Endothelial cell of umbilical vein (primary cell): ENCODE measurements at regions of chr16 and their contacts with region 1.

Region 1: DNA sequence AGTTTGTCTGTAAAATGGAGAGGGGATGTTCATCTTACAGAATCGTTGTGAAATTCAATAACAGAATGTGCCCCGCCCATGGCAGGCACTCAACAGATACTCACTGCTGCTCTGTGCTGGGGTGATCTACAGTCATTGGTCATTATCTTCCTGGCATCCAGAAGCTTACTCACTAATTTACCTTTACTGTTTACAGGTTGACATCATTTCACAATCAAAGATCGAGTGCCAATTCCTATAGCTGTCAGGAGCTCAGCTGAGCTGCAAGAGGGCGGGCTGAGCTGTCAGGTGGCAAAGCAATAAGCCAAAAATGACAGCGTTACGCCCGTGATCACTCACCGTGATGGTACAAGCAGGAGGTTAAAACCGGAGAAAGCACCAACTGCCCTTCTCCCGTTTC is 51.2 kb downstream of the LITAF start:
- DNase-seq: no peak
- H3K4me3 ChIP-seq: no peak overlapping the region
- H3K27ac ChIP-seq: no peak overlapping the region
- H3K4me1 ChIP-seq: peaks cover 3% of the 10 kb centered on the region
- H3K27me3 ChIP-seq: no peaks in the 10 kb centered on the region
- CTCF ChIP-seq: no peak
- POLR2A ChIP-seq: no peak

Region 2: DNA sequence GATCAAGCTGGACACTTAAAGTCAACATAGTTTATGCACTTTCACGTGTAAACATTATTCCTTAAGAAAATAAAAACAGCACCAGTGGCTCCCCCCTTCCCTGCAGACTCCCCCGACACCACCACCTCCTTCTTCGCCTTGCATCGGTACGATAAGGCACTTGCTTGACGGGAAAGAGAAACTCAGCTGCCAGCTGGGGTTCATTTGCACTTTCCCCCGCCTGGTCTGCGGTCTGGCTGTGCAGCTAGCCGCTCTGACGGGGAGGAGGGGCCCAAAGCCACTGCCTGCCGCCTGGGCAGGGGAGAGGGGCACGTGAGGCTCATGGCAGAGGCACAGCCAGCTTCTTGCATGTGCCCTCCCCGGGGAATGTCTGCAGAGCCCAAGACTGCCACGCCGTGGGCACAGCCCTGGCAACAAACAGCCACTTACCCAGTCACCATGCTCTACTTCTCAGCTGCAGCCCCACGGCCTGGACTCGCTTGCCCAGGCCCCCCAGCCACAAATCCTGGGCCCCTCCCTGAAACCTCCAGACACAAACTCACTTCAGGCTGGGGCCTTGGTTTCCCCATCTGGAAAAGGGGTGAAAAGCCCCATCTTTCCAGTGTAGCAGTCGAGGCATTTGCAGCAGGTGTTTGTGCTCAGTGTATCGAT is 237.9 kb before region 1 on chr16:
- CTCF ChIA-PET with region 1: no interaction called
- POLR2A ChIA-PET with region 1: no interaction called
- dilution Hi-C with region 1: no loop called
- intact Hi-C with region 1: no loop called
- DNase-seq: peak; percentile 15
- H3K4me3 ChIP-seq: no peak overlapping the region
- H3K27ac ChIP-seq: no peak overlapping the region
- H3K4me1 ChIP-seq: no peaks in the 10 kb centered on the region
- H3K27me3 ChIP-seq: no peaks in the 10 kb centered on the region
- CTCF ChIP-seq: no peak
- POLR2A ChIP-seq: no peak

Region 3: DNA sequence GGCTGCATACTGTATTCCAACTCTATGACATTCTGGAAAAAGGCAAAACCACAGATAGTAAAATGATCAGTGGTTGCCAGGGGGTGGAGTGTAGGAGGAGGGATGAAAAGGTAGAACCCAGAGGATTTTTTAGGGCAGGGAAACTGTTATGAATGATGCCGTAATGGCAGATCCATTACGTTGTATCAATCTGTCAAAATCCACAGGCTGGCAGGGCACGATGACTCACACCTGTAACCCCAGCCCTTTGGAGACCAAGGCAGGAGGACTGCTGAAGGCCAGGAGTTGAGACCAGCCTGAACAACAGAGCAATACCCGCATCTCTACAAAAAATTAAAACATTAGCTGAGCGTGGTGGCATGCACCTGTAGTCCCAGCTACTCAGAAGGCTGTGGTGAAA is 98.4 kb before region 1 on chr16:
- CTCF ChIA-PET with region 1: interaction called, 13 read pairs
- POLR2A ChIA-PET with region 1: no interaction called
- dilution Hi-C with region 1: no loop called
- intact Hi-C with region 1: no loop called
- DNase-seq: no peak
- H3K4me3 ChIP-seq: no peak overlapping the region
- H3K27ac ChIP-seq: no peak overlapping the region
- H3K4me1 ChIP-seq: no peaks in the 10 kb centered on the region
- H3K27me3 ChIP-seq: peaks cover 0 to 3% of the 10 kb centered on the region in 2 experiments
- CTCF ChIP-seq: no peak
- POLR2A ChIP-seq: no peak

Region 4: GRCh38 chr16:11506741-11507305 is 28.6 kb before region 1 on chr16:
- CTCF ChIA-PET with region 1: interaction called, 10 read pairs
- POLR2A ChIA-PET with region 1: no interaction called
- dilution Hi-C with region 1: no loop called
- intact Hi-C with region 1: no loop called
- DNase-seq: no peak
- H3K4me3 ChIP-seq: no peak overlapping the region
- H3K27ac ChIP-seq: no peak overlapping the region
- H3K4me1 ChIP-seq: no peaks in the 10 kb centered on the region
- H3K27me3 ChIP-seq: no peaks in the 10 kb centered on the region
- CTCF ChIP-seq: no peak
- POLR2A ChIP-seq: no peak

Region 5: DNA sequence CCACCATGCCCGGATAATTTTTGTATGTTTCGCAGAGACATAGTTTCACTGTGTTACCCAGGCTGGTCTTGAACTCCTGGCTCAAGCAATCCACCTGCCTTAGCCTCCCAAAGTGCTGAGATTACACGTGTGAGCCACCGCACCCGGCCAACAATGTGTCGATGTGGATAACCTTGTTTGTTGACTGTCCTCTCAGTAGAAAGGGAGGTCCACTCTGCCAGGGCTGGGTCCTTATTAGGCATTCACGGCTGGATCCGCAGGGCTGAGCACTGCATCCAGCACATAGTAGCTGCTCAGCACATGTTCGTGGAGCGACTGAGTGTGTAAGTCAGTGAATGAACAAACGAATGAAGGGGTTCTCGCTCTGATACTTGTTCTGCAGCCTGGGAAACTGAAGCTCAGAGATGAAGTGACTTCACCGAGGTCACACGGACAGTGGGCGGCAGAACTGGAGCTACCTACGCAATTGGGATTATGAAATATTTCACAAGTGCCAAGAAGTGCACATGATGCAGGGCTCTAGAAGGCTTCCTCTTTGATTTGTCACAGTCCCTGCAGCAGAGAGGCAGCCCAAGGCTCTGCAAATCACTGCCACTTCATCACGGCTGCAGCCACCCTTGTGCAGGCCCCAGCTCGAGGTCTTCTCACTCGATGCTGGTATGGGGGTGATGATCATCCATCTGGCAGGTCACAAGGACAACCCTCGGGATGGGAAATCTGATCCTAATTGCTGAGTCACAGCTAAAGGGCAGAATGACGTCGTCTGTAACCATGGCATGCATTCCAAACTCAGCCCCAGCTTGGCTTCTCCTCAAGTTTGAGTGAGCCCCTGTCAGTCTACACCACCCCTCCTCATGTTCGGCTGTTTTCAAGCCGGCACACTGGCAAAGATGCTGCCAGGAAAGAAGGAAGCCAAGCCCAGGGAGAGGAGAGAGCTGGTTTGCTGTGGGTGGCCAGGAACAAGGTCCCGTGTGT is 104.7 kb after region 1 on chr16:
- CTCF ChIA-PET with region 1: interaction called, 30 read pairs
- POLR2A ChIA-PET with region 1: no interaction called
- dilution Hi-C with region 1: no loop called
- intact Hi-C with region 1: loop called (anchors 1 kb)
- DNase-seq: peak; percentile 18
- H3K4me3 ChIP-seq: no peak overlapping the region
- H3K27ac ChIP-seq: no peak overlapping the region
- H3K4me1 ChIP-seq: peaks cover 3% of the 10 kb centered on the region
- H3K27me3 ChIP-seq: peaks cover 2% of the 10 kb centered on the region in 2 experiments
- CTCF ChIP-seq: no peak
- POLR2A ChIP-seq: no peak

Region 6: DNA sequence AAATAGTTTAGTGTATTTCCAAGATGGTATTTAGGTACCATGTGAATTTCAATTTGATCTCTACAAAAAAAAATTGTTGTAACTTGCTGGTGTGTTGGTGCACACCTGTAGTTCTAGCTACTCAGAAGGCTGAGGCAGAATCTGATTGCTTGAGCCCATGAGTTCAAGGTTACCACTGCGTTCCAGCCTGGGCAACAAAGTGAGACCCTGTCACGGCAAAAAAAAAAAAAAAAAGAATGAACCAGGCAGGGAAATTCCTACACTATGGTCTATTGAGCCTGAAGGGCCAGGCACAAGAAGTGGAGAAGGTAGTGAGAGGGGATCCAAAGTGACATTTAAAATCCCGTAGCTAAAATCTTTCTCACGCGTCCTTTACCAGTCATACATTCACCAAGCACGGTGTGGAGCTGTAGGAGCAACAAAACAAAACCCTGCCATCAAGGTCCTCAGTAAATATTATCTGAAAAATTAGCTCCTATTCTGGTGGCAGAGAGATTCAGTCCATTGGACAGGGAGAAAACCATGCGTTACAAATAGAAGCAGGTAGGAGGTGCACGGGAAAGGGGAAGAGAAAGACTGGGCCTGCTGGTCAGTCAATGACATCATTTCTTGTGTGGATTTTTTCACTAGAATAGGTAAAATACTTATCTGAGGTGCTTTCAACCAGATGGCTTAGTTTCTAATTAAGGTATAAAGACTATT is 179.9 kb after region 1 on chr16:
- CTCF ChIA-PET with region 1: interaction called, 41 read pairs
- POLR2A ChIA-PET with region 1: no interaction called
- dilution Hi-C with region 1: no loop called
- intact Hi-C with region 1: loop called (anchors 1 kb)
- DNase-seq: no peak
- H3K4me3 ChIP-seq: no peak overlapping the region
- H3K27ac ChIP-seq: no peak overlapping the region
- H3K4me1 ChIP-seq: no peaks in the 10 kb centered on the region
- H3K27me3 ChIP-seq: no peaks in the 10 kb centered on the region
- CTCF ChIP-seq: no peak
- POLR2A ChIP-seq: no peak